ENCODE measurements at regions of chr6 and their contacts with region 1.

Region 1: GRCh38 chr6:106608062-106608668 is 21.1 kb downstream of the RTN4IP1 start:
- DNase-seq: peak; percentile 40
- ATAC-seq: peak; percentile 95
- H3K4me3 ChIP-seq: no peak overlapping the region
- H3K27ac ChIP-seq: no peak overlapping the region
- H3K4me1 ChIP-seq: no peaks in the 10 kb centered on the region; the same call in 1 of the 2 replicates
- H3K27me3 ChIP-seq: no peaks in the 10 kb centered on the region
- CTCF ChIP-seq: peak; percentile 68 to 72 (median 68)
- EP300 ChIP-seq: no peak
- POLR2A ChIP-seq: no peak
- RAD21 ChIP-seq: peak; percentile 76

Region 2: GRCh38 chr6:106591111-106591825 is 16.9 kb before region 1 on chr6:
- CTCF ChIA-PET with region 1: interaction called, 6 read pairs
- POLR2A ChIA-PET with region 1: no interaction called
- RAD21 ChIA-PET with region 1: interaction called, 3 read pairs
- SMC1A ChIA-PET with region 1: interaction called, 11 read pairs
- in situ Hi-C with region 1: no loop called
- intact Hi-C with region 1: no loop called
- DNase-seq: no peak
- ATAC-seq: no peak
- H3K4me3 ChIP-seq: no peak overlapping the region
- H3K27ac ChIP-seq: no peak overlapping the region
- H3K4me1 ChIP-seq: no peaks in the 10 kb centered on the region
- H3K27me3 ChIP-seq: no peaks in the 10 kb centered on the region
- CTCF ChIP-seq: no peak
- EP300 ChIP-seq: no peak
- POLR2A ChIP-seq: no peak
- RAD21 ChIP-seq: no peak

Region 3: DNA sequence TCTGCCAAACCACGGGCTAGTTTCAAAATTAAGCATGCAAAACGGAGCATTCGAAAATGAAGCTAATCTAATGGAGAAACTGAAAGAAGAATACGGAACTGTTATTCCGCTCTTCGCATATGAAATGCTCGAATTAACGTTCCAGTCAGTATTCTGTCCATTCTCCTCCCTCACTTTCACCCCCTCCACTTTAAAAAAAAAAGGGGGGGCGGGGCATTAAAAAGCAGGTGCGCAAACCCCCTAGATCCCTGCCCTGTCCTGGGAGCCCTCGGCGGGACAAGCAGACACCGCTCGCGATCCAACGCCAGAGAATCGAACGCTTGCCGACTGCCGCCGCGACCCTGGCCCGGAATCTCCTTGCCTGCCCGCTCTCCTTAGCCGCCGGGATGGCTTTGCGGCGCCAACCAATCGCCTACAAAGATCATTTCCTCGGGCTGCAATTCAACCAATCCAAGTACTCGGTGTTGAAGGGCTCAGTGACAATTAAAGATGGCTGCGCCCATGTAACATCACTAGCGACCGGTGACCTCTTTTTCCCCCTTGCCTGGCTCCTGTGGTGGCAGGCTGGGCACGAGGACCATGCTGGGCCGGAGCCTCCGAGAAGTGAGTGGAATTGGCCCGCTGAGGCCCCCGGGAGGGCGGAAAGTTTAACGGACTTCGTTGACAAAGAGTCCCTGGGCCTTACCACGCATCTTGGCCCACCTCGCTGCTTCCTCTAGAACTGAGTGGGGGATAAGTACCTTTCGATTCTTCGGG is 21.1 kb after region 1 on chr6 and contains the starts of genes QRSL1 and RTN4IP1:
- CTCF ChIA-PET with region 1: interaction called, 7 read pairs
- POLR2A ChIA-PET with region 1: no interaction called
- RAD21 ChIA-PET with region 1: interaction called, 8 read pairs
- SMC1A ChIA-PET with region 1: interaction called, 18 read pairs
- in situ Hi-C with region 1: no loop called
- intact Hi-C with region 1: loop called (anchors 2 kb)
- DNase-seq: peak; percentile 88
- ATAC-seq: peak; percentile 89
- H3K4me3 ChIP-seq: peak within 1 kb of the TSS; percentile 95
- H3K27ac ChIP-seq: peak within 1 kb of the TSS; percentile 81
- H3K4me1 ChIP-seq: peaks cover 16% of the 10 kb centered on the region; the same call in 1 of the 2 replicates
- H3K27me3 ChIP-seq: no peaks in the 10 kb centered on the region
- CTCF ChIP-seq: no peak
- EP300 ChIP-seq: 0 out of 4 replicates have a peak, but pooled peaks of 1 of the 2 experiments have one; percentile 6
- POLR2A ChIP-seq: peak; percentile 81
- RAD21 ChIP-seq: no peak
- polyA plus RNA-seq, gene QRSL1: 11.9 to 15.1 TPM
- polyA plus RNA-seq, gene RTN4IP1: 15.8 to 17.0 TPM

Region 4: DNA sequence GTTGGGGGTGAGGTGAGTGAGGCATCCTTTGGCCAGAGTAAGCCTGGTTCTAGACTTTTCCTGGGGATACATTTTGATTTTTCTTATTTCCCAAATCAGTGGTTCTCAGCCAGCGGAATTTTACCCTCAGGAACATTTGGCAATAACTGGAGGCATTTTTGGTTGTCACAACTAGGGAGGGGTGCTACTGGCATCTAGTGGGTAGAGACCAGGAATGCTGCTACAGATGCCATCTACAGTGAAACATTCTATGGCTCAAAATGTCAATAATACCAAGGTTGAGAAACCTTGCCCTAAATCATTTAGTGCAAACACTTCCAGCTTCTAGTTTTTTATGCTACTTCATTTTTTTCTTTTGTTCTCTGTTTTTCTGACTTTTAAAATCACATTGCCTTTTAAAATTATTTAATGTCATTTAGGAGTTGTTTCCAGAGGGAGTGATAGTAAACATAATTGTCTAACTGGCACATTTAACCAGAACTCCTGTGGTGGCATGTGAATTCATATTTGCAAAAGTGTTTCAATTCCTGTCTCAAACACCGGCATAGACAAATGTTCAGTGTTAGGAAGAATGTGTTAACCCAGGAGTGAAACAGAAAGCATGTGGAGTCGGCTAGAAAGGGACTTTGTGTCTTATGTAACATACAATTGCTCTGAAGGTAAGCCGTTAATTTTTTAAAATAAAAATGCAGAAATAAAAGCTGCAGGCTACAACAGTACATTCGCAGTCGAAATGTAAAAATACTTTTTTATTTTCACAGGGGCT is 80.2 kb after region 1 on chr6:
- CTCF ChIA-PET with region 1: interaction called, 15 read pairs
- POLR2A ChIA-PET with region 1: no interaction called
- RAD21 ChIA-PET with region 1: no interaction called
- SMC1A ChIA-PET with region 1: interaction called, 5 read pairs
- in situ Hi-C with region 1: no loop called
- intact Hi-C with region 1: loop called (anchors 1 kb)
- DNase-seq: peak; percentile 25
- ATAC-seq: peak; percentile 52
- H3K4me3 ChIP-seq: no peak overlapping the region
- H3K27ac ChIP-seq: peak overlapping the region; percentile 37; the same call in 1 of the 2 replicates
- H3K4me1 ChIP-seq: no peaks in the 10 kb centered on the region; the same call in 1 of the 2 replicates
- H3K27me3 ChIP-seq: no peaks in the 10 kb centered on the region
- CTCF ChIP-seq: peak; percentile 6 to 19 (median 17); a peak in 1 of 6 replicates
- EP300 ChIP-seq: no peak
- POLR2A ChIP-seq: no peak
- RAD21 ChIP-seq: peak; percentile 39

Region 5: GRCh38 chr6:106997390-106998158 is 389.4 kb after region 1 on chr6:
- CTCF ChIA-PET with region 1: interaction called, 14 read pairs
- POLR2A ChIA-PET with region 1: no interaction called
- RAD21 ChIA-PET with region 1: interaction called, 5 read pairs
- SMC1A ChIA-PET with region 1: interaction called, 8 read pairs
- in situ Hi-C with region 1: no loop called
- intact Hi-C with region 1: no loop called
- DNase-seq: peak; percentile 12
- ATAC-seq: peak; percentile 91
- H3K4me3 ChIP-seq: no peak overlapping the region
- H3K27ac ChIP-seq: no peak overlapping the region
- H3K4me1 ChIP-seq: no peaks in the 10 kb centered on the region
- H3K27me3 ChIP-seq: no peaks in the 10 kb centered on the region
- CTCF ChIP-seq: peak; percentile 81 to 96 (median 91)
- EP300 ChIP-seq: no peak
- POLR2A ChIP-seq: no peak
- RAD21 ChIP-seq: peak; percentile 74

Measured in GM12878 (cell line).